Gastrocnemius medialis (tissue), 4 donors: ENCODE measurements at regions of chr7 and their contacts with region 1.

Region 1: GRCh38 chr7:129875745-129876411 is 76.9 kb downstream of the UBE2H start:
- DNase-seq: no peak
- ATAC-seq: peak; percentile 69 to 75
- H3K4me3 ChIP-seq: peak overlapping the region; percentile 11 to 29 (median 18)
- H3K27ac ChIP-seq: peak overlapping the region; percentile 72 to 86 (median 78)
- H3K4me1 ChIP-seq: peaks cover 45 to 55% of the 10 kb centered on the region in 2 donors
- H3K27me3 ChIP-seq: no peaks in the 10 kb centered on the region
- CTCF ChIP-seq: no peak
- POLR2A ChIP-seq: peak in 1 of 2 donors; percentile 27

Region 2: GRCh38 chr7:129840757-129841156 is 35.1 kb before region 1 on chr7:
- in situ Hi-C with region 1: no loop called
- intact Hi-C with region 1: no loop called
- DNase-seq: no peak
- ATAC-seq: no peak
- H3K4me3 ChIP-seq: no peak overlapping the region
- H3K27ac ChIP-seq: peak overlapping the region; percentile 38 to 65 (median 50)
- H3K4me1 ChIP-seq: peaks cover 47 to 52% of the 10 kb centered on the region in 2 donors
- H3K27me3 ChIP-seq: no peaks in the 10 kb centered on the region
- CTCF ChIP-seq: no peak
- POLR2A ChIP-seq: no peak

Region 3: DNA sequence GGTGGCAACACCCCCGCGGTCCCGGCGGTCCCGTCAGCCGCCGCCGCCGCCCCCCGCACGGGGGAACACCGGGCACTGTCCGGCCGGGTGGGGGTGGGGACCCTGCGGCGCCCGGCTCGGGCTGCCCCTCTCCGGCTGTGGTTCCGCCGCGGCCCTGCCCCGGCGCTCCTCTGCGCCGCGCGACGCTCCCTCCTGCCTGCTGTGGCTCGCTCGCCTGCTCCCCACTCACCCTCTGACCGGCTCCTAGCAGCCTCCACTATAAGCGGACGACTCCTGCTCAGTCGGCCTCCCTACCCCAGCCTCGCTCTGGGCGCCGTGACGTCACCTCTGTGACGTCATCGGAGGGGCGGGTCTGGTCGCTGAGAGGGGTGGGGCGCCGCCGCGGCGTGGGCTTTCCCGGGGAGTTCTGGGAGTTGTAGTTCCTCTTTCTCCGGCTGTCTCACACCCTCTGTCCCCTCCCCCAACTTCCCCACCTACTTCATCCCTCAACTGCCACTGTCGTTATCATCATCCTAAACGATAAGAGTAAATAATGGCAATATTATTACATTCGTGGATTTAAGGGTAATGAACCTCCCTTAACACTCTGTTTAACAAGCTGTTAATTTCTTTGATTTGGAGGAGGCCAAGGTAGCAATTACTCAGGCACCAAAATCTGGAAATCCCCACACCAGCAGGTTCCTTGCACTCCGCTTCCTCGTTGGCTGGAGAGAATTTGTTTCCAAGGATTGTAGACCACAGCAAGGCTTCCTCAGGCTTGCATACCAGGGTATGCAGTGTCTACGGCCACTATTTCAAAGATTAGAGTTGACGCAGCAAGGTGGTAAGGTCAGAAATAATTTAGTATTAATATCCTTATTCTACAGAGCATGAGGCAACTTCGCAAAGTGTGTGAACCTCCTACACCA is 77.0 kb after region 1 on chr7 and contains the start of gene UBE2H:
- in situ Hi-C with region 1: no loop called
- intact Hi-C with region 1: loop called (anchors 2 kb)
- DNase-seq: peak; percentile 88 to 90
- ATAC-seq: peak; percentile 71 to 76
- H3K4me3 ChIP-seq: peak within 1 kb of the TSS; percentile 81 to 97 (median 86)
- H3K27ac ChIP-seq: peak within 1 kb of the TSS; percentile 92 to 99 (median 99)
- H3K4me1 ChIP-seq: peaks cover 18 to 23% of the 10 kb centered on the region in 2 donors
- H3K27me3 ChIP-seq: no peaks in the 10 kb centered on the region
- CTCF ChIP-seq: peak in 2 of 5 experiments; percentile 8 to 25
- POLR2A ChIP-seq: peak; percentile 98 to 100
- total RNA-seq, gene UBE2H: 82.7 to 162 (median 103) TPM